Activated naive CD4-positive, alpha-beta T cell treated with anti-CD3 and anti-CD28 coated beads for 36 hours (primary cell): ENCODE measurements at regions of chr5 and their contacts with region 1.

Region 1: GRCh38 chr5:142922223-142922952 is 152.2 kb downstream of the ARHGAP26 start:
- DNase-seq: no peak
- H3K4me3 Mint-ChIP-seq: no peak overlapping the region
- H3K27ac Mint-ChIP-seq: no peak overlapping the region
- H3K4me1 Mint-ChIP-seq: peaks cover 13% of the 10 kb centered on the region
- H3K27me3 Mint-ChIP-seq: no peaks in the 10 kb centered on the region

Region 2: DNA sequence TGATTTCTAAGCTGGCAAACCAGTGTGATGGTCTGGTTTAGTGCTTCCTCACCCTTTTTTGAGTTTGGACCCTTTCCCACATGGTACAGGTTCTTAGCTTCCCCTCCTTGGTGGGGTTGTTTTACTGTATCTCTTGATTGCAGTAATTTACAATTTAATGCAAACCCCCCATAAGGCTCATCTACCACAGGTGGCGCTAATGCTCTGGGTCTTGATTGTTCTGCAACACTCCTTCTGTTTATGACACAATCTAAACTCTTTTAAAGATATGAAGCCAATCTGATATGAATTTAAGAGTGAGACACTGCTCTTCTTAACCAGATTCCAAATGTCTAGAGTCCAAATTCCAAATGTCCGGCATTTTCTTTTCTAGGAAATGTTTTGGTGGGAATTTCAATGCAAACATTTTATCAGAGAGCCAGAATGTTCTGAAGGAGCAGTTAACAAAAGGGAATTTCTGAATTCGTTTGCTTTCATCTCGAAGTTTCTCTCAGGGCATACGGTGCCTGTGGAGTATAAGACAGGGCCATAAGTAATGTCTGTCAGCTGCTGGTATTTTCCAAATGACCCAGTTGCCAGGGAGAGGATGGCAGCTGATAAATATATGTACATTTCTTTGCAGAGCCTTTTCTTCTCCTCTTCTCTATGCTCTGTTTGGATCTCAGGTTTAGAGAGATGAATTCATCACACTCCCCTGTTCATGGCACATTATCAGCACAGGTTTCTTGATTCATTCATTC is 94.6 kb after region 1 on chr5:
- CTCF ChIA-PET with region 1: no interaction called
- intact Hi-C with region 1: no loop called
- DNase-seq: peak; percentile 77
- H3K4me3 Mint-ChIP-seq: no peak overlapping the region
- H3K27ac Mint-ChIP-seq: no peak overlapping the region
- H3K4me1 Mint-ChIP-seq: peaks cover 15% of the 10 kb centered on the region
- H3K27me3 Mint-ChIP-seq: no peaks in the 10 kb centered on the region

Region 3: GRCh38 chr5:144142139-144142823 is 1219.9 kb after region 1 on chr5:
- CTCF ChIA-PET with region 1: no interaction called
- intact Hi-C with region 1: loop called (anchors 5 kb)
- DNase-seq: no peak
- H3K4me3 Mint-ChIP-seq: no peak overlapping the region
- H3K27ac Mint-ChIP-seq: no peak overlapping the region
- H3K4me1 Mint-ChIP-seq: peaks cover 2% of the 10 kb centered on the region
- H3K27me3 Mint-ChIP-seq: no peaks in the 10 kb centered on the region